ENCODE measurements at regions of chrX and their contacts with region 1.

Region 1: GRCh38 chrX:79288733-79289132 is 78.4 kb downstream of the ITM2A start:
- DNase-seq: no peak
- H3K4me3 Mint-ChIP-seq: no peak overlapping the region
- H3K27ac Mint-ChIP-seq: no peak overlapping the region
- H3K4me1 Mint-ChIP-seq: peaks cover 53% of the 10 kb centered on the region
- H3K27me3 Mint-ChIP-seq: no peaks in the 10 kb centered on the region

Region 2: GRCh38 chrX:79153348-79153747 is 135.4 kb before region 1 on chrX:
- intact Hi-C with region 1: no loop called
- DNase-seq: no peak
- H3K4me3 Mint-ChIP-seq: peak overlapping the region; percentile 73
- H3K27ac Mint-ChIP-seq: peak overlapping the region; percentile 85
- H3K4me1 Mint-ChIP-seq: peaks cover 82% of the 10 kb centered on the region
- H3K27me3 Mint-ChIP-seq: no peaks in the 10 kb centered on the region

Region 3: DNA sequence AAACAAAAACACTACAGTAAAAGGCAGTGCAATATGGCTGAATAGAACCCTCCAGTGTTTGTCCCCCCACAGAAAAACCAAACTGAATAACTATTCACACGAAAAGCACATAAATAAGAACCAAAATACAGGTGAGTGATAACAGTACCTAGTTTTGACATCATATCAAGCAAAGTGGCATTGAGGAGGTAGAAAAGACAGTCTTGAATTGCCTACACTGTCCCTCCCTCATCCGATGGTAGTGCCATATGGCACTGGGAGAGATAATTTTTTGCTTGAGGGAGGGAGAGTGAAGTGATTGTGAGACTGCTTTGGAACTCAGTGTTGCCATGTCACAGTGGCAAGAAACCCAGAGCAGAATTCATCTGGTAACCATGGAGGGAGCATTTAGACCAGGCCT is 45.0 kb before region 1 on chrX:
- intact Hi-C with region 1: no loop called
- DNase-seq: no peak
- H3K4me3 Mint-ChIP-seq: no peak overlapping the region
- H3K27ac Mint-ChIP-seq: no peak overlapping the region
- H3K4me1 Mint-ChIP-seq: peaks cover 15% of the 10 kb centered on the region
- H3K27me3 Mint-ChIP-seq: no peaks in the 10 kb centered on the region

Region 4: GRCh38 chrX:79366873-79367749 is 78.4 kb after region 1 on chrX and contains the start of gene ITM2A:
- intact Hi-C with region 1: loop called (anchors 5 kb)
- DNase-seq: peak; percentile 37
- H3K4me3 Mint-ChIP-seq: peak within 1 kb of the TSS; percentile 94
- H3K27ac Mint-ChIP-seq: peak within 1 kb of the TSS; percentile 95
- H3K4me1 Mint-ChIP-seq: peaks cover 35% of the 10 kb centered on the region
- H3K27me3 Mint-ChIP-seq: no peaks in the 10 kb centered on the region
- total RNA-seq, gene ITM2A: 114 and 116 TPM in 2 replicates